Left cardiac atrium (tissue), 4 donors: ENCODE measurements at regions of chr4 and their contacts with region 1.

Region 1: DNA sequence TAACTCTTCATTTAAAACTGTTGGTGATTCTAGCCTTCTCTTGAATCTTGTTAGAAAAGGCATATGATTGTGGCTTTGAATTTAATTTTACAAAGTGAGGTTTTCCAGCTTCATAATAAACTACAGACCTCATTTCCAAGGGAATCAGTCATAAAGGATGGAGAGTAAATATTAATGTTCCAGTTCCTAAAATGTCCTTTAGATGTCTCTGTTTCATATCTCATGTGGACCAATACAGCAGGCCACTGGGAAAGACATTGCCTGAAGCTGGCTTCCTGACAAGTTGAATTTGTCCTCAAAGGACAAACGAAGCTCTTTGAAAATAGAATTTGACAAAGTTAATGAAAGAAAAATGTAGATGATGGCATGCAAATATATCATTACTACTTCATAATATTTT is 125.4 kb downstream of the ZNF330 start:
- DNase-seq: no peak
- ATAC-seq: peak; percentile 84 to 87

Region 2: DNA sequence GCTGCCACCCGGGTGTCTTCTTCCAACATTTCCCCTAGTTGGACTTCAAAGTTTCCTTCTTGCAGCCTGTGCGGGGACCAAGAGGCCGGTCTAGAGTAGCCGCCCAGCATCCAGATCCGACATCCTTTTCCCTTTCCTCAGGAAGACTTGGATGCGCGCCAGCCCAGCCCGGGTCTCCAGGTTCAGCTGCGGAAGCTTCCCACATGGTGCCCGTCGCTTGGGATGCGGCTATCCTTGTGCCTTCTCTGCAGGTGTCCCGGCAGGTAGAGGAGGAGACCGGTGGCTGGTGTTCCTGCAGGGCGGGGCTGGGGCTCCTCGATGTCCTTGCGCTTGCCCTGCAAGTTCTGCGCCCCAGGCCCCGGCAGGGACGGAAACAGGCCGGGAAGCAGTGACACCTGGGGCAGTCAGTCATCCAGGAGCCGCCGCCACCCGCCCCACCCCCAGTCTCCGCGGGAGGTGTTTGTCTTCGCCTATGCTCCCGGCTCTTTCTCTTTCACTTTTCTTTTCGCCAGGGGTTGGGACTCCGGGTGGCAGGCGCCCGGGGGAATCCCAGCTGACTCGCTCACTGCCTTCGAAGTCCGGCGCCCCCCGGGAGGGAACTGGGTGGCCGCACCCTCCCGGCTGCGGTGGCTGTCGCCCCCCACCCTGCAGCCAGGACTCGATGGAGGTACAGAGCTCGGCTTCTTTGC is 290.1 kb after region 1 on chr4 and contains the start of gene IL15:
- intact Hi-C with region 1: loop called in 1 of 2 experiments (anchors 5 kb)
- DNase-seq: peak; percentile 70
- ATAC-seq: peak; percentile 79 to 86
- total RNA-seq, gene IL15: 3.5 to 3.8 TPM

Region 3: DNA sequence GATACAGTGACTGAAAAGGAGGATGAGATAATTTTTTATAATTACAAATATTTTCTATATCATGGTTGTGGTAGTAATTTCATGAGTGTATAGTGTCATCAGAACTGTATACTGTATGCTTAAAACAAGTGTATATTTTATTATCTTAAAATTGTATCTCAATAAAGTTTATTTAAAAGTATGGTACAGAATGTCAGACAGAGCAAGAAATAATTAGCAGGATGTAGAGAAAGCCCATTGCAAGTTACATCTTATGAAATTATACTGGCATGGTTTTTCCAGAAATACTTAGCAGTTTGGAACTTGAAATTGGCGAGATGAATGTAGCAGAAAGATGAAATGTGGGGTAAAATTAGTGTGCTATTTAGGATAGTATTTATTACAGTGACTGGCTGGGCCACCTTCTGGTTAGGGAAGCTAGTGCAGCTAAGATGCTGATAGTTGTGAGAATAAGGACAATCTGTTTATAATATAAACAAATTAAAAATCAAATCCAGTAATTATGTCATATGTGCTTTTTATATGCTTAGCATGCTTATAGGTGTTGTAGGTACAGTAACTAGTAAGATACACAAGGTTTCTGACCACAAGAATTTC is 365.0 kb after region 1 on chr4:
- intact Hi-C with region 1: loop called in 1 of 2 experiments (anchors 10 kb)
- DNase-seq: no peak
- ATAC-seq: peak in 1 of 2 donors; percentile 38